Activated CD4-positive, alpha-beta T cell treated with anti-CD3 and anti-CD28 coated beads, Interleukin-2, amount 10 ng/mL, durations not matched to agents 24 days and 14 days (primary cell): ENCODE measurements at regions of chr3 and their contacts with region 1.

Region 1: DNA sequence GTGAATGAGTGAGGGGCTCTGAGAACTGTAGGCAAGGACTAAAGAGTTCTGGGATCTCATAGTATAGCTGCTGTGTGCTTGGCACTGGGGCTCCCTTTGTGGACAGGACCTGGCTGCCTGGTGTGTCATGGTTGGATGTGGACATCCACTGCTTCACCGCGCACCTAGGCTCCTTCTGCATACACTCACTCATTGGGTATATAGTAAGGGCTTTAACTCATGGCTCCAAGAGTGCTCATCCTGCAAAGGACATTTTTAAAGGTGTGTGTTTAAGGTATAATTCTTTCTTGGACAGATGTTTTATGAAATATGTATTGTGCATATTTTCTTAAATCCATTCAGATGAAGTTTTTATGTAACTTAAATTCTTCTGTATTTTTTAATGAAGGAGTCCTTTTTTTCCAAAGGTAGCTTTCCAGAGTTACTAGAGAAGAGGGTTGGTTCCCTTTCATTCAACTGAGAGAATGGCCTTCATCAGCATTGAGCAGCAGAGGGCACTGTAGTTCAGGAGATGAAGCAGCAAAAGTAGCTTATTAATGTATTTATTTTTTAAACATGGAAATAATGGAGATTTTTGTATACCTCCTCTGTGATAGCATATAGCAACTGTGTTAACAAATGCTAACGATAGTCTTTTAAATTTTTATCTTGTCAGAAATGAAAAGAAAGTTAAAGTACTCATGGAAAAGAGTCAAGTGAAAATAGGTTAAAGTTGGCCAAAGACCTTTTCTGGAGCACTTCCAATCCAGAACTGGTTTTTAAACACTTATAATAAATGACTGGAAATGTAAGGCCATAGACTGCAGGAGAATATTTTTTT is 25.2 kb downstream of the OXNAD1 start:
- DNase-seq: peak; percentile 89
- H3K4me3 Mint-ChIP-seq: peak overlapping the region; percentile 93
- H3K27ac Mint-ChIP-seq: peak overlapping the region; percentile 92
- H3K4me1 Mint-ChIP-seq: peaks cover 66% of the 10 kb centered on the region
- H3K27me3 Mint-ChIP-seq: no peaks in the 10 kb centered on the region

Region 2: DNA sequence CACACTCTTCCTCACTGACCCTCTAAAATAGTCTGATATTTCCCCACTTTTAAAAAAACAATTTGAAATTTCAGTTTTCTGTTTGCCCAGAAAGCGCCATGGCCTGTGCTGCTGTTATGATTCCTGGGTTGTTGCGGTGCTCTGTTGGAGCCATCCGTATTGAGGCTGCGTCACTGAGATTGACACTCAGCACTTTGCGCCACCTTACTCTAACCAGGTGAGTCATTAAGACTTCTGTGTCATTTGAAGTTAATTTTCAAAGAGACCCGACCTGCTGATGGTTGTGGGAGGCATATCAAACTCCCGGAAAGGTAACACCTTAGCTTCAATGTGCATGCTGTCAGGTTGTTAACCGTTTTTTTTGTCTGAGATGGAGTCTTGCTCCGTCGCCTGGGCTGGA is 19.4 kb before region 1 on chr3:
- intact Hi-C with region 1: no loop called
- DNase-seq: peak; percentile 48
- H3K4me3 Mint-ChIP-seq: no peak overlapping the region
- H3K27ac Mint-ChIP-seq: no peak overlapping the region
- H3K4me1 Mint-ChIP-seq: peaks cover 19% of the 10 kb centered on the region
- H3K27me3 Mint-ChIP-seq: no peaks in the 10 kb centered on the region

Region 3: GRCh38 chr3:16300881-16301359 is 10.7 kb after region 1 on chr3:
- intact Hi-C with region 1: loop called (anchors 1 kb)
- DNase-seq: peak; percentile 90
- H3K4me3 Mint-ChIP-seq: peak overlapping the region; percentile 86
- H3K27ac Mint-ChIP-seq: peak overlapping the region; percentile 97
- H3K4me1 Mint-ChIP-seq: peaks cover 83% of the 10 kb centered on the region
- H3K27me3 Mint-ChIP-seq: no peaks in the 10 kb centered on the region

Region 4: DNA sequence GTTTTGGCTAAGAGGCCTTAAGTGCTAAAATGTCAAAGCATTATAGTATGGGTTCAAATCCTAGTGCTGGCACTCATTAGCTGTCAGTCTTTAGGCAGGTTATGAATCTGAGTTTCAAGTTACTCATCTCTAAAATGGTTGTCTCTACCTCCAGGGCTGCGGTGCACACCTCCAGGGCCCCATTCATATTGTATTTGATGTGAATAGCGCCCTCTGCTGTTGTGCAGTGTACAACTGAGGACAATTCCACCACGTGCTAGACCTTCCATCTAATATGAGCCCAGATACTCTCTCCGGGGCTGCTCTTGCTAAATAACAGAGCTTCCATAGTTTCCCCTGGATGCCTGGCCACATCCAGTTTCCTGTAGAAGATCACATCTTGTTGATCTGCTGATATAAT is 29.1 kb after region 1 on chr3:
- intact Hi-C with region 1: loop called (anchors 1 kb)
- DNase-seq: peak; percentile 94
- H3K4me3 Mint-ChIP-seq: peak overlapping the region; percentile 35
- H3K27ac Mint-ChIP-seq: peak overlapping the region; percentile 80
- H3K4me1 Mint-ChIP-seq: peaks cover 61% of the 10 kb centered on the region
- H3K27me3 Mint-ChIP-seq: no peaks in the 10 kb centered on the region

Region 5: DNA sequence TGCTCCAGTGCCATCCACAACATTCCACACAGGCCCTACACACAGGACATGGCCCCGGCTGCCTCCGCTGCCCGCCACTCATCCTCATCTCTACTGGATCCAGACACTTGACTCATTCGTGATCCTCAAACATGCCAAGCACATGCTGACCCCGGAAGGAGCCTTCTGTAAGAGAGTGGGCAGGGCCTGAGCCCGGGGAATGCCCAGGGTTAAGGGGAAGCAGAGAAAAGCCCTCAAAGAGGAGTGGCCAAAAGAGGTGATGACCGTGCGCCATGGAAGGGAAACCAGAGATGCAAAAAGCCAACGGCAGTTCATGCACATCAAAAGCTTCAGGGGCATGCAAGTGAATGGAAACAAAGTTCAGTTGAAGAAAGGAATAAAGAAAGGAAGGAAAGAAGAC is 177.2 kb after region 1 on chr3:
- intact Hi-C with region 1: loop called (anchors 5 kb)
- DNase-seq: peak; percentile 88
- H3K4me3 Mint-ChIP-seq: peak overlapping the region; percentile 78
- H3K27ac Mint-ChIP-seq: peak overlapping the region; percentile 94
- H3K4me1 Mint-ChIP-seq: peaks cover 64% of the 10 kb centered on the region
- H3K27me3 Mint-ChIP-seq: no peaks in the 10 kb centered on the region

Region 6: DNA sequence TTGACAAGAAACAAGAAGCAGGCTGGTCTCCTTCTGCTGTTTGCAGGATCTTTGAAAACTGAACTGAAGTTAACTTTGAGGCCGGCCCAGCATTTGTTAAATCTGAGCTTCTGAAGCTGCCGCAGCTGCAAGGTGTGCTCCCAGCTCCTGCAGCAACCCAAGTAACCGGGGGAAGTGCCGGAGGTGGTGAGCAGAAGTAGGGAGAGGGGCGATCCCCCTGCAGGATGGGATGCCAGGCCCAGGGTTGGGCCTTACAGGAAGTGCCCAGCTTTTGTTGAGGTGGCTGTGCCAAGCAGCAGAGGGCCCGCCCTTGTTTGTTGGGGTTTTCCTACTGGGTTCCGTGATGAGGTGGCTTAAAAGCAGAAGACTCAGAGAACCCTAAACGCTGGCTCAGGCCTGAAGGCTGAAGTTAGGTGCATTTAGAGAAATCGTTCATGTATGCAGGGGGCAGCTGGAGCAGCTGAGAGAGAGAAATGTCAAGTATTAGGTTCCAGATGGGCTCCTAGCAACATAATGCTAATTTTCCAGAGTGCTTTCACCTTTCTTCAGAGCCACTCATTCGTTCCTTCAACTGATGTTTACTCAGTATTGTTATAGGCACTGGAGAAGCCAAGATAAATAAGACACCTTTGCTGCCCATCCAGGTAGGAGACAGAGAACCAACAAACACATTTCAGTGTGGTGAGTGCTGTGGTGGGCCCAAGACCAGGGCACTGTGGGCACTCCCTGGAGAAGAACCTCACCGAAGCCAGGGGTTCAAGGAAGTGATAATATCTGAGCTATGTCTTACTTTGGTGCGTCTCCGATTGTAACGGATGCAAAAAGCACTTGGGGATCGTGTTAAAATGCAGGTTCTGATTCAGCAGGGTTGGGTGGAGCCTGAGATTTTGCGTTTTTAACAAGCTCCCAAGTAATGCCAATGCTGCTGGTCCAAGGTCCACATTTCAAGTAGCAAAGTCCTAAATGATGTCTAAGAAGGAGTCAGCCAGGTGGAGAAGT is 552.4 kb after region 1 on chr3:
- intact Hi-C with region 1: loop called (anchors 5 kb)
- DNase-seq: peak; percentile 92
- H3K4me3 Mint-ChIP-seq: peak overlapping the region; percentile 82
- H3K27ac Mint-ChIP-seq: peak overlapping the region; percentile 99
- H3K4me1 Mint-ChIP-seq: peaks cover 60% of the 10 kb centered on the region
- H3K27me3 Mint-ChIP-seq: no peaks in the 10 kb centered on the region

Region 7: DNA sequence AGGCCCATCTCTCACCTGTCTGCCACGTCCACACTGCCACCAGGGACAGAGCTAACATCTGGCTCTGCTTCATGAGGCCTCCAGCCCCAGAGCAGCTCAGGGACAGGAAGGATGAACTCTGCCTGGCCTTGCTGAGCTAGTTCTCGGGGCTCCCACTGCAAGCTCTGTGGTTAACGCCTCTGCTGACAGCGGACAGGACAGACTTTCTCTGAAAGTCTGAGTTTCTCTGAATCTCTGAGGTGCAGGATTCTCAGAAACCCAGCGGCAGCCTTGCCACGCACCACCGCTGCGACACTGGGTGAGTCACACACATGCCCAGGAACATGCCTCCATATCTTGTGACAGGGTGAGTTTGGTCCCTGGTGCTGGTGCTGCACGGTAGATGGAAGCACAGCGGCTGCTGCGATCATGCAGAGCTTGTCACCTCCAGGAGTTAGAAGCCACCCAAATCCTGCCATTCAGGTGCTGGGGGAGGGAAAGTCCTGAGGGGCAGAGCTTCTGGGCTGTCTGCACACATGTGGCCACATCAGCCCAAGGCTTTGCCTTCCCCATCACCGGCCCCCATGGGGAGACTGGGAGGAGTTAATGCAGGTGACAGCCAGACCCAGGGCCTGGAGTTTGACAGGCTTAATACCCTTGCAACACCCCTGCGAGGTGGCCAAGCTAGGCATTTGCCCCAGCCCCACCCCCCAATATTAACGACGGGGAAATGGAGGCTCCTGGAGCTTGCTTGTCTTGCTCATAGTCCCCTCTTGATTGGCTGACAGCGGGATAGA is 861.6 kb after region 1 on chr3:
- intact Hi-C with region 1: loop called (anchors 10 kb)
- DNase-seq: peak; percentile 97
- H3K4me3 Mint-ChIP-seq: peak overlapping the region; percentile 80
- H3K27ac Mint-ChIP-seq: peak overlapping the region; percentile 93
- H3K4me1 Mint-ChIP-seq: peaks cover 66% of the 10 kb centered on the region
- H3K27me3 Mint-ChIP-seq: no peaks in the 10 kb centered on the region